Mammary epithelial cell (primary cell): ENCODE measurements at regions of chr18 and their contacts with region 1.

Region 1: DNA sequence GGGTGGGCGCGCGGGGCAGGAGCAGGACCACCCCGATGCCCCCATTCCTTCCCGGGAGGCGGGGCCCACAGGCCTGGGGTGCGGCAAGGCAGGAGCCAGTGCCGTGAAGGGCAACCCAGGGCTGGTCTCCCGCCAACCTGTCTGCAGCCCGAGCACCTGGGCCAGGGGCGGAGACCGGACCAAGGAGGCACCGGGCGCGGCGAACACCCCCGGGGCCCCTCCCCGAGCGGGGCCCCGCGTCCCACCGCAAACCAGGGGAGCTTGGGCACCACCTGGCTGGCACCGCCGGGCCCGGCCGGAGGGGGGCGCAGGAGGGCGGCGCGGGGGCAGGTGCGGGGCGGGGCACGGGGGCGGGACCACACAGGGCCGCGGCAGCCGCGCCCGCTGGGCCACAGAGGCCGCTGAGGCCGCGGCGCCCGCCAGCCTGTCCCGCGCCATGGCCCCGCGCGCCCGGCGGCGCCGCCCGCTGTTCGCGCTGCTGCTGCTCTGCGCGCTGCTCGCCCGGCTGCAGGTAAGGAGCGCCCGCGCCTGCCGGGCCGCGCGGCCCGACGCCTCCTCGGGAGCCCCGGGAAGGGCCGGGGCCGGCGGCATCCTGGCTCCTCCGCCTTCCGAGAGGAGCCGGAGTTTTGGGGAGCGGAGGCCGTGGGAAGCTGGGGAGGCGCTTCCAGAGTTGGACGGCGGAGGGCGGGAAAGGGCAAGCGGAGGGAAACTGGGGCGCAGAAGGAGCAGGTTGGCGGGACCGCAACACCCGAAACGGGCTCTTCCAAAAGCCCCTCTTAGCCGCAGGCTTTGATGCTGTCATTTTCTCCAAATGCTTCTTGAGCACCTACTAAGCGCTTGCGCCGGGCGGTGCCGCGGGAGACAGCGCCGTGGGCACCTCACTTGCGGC is at the start of gene TNFRSF11A:
- DNase-seq: peak; percentile 58
- H3K4me3 ChIP-seq: peak within 1 kb of the TSS; percentile 54 to 71 (median 64)
- H3K27ac ChIP-seq: no peak within 1 kb of the TSS
- H3K4me1 ChIP-seq: peaks cover 14% of the 10 kb centered on the region
- H3K27me3 ChIP-seq: peaks cover 3% of the 10 kb centered on the region
- CTCF ChIP-seq: peak; percentile 7 to 47
- total RNA-seq, gene TNFRSF11A: 0.50 to 6.1 TPM

Region 2: GRCh38 chr18:61282926-61283325 is 1042.2 kb before region 1 on chr18:
- CTCF ChIA-PET with region 1: no interaction called
- dilution Hi-C with region 1: no loop called
- in situ Hi-C with region 1: no loop called
- intact Hi-C with region 1: no loop called
- DNase-seq: no peak
- H3K4me3 ChIP-seq: no peak overlapping the region
- H3K27ac ChIP-seq: no peak overlapping the region
- H3K4me1 ChIP-seq: peaks cover 11% of the 10 kb centered on the region
- H3K27me3 ChIP-seq: no peaks in the 10 kb centered on the region
- CTCF ChIP-seq: no peak

Region 3: DNA sequence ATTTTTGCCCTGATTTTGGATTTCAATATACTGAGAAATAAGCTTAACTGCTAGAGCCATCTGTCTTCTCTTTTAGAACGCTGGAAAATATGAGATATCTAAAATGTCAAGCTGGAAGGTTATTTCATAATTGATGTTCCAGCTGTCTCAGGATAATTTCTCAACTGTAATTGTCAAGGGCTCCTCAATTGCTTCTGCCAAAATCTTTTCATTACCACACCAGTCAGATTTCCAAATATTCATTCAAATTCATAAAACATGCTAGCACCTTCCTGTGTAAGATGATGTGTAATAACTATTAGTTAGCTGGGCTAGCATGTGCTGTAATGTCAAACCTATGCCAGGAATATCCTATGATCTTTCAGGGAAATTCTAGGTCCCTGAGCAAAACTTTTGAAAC is 88.0 kb after region 1 on chr18:
- CTCF ChIA-PET with region 1: no interaction called
- dilution Hi-C with region 1: loop called (anchors 5 kb)
- in situ Hi-C with region 1: no loop called
- intact Hi-C with region 1: no loop called
- DNase-seq: no peak
- H3K4me3 ChIP-seq: no peak overlapping the region
- H3K27ac ChIP-seq: no peak overlapping the region
- H3K4me1 ChIP-seq: no peaks in the 10 kb centered on the region
- H3K27me3 ChIP-seq: no peaks in the 10 kb centered on the region
- CTCF ChIP-seq: no peak

Region 4: GRCh38 chr18:62566199-62566598 is 241.0 kb after region 1 on chr18:
- CTCF ChIA-PET with region 1: no interaction called
- dilution Hi-C with region 1: no loop called
- in situ Hi-C with region 1: loop called in 1 of 2 experiments (anchors 25 kb)
- intact Hi-C with region 1: no loop called
- DNase-seq: no peak
- H3K4me3 ChIP-seq: no peak overlapping the region
- H3K27ac ChIP-seq: no peak overlapping the region
- H3K4me1 ChIP-seq: no peaks in the 10 kb centered on the region
- H3K27me3 ChIP-seq: no peaks in the 10 kb centered on the region
- CTCF ChIP-seq: peak in 1 of 2 donors; percentile 39